Activated CD4-positive, alpha-beta T cell treated with anti-CD3 and anti-CD28 coated beads for 36 hours (primary cell): ENCODE measurements at regions of chr2 and their contacts with region 1.

Region 1: DNA sequence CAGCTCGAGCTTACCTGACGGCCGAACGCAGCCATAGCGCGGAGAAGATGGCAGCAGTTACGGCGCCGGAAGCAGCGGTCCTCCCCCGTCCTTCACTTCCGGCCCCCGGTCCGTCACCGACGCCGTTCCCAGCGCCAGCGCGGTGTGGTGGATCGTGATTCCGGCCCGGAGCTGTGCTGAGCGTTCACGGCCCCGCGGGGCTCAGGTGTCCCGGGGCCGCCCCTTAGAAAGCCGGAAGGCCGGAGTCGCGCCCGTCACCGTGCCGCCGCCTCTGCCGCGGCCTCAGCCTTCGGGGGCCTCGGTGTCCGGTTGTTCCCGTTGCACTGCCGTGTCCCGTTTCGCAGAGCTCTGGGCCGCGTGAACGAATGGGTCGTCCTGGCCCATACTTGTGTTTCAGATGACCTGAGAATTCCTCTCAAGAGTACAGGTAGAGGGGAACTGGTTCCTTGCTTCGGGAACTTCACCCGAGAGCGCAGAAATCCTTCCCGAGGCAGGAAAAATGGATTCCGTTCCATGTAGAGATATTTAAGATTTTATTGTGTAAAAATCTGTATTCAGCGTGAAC is at the start of gene MTERF4:
- DNase-seq: peak; percentile 94
- ATAC-seq: peak; percentile 97
- H3K4me3 Mint-ChIP-seq: peak within 1 kb of the TSS; percentile 98
- H3K27ac Mint-ChIP-seq: peak within 1 kb of the TSS; percentile 99
- H3K4me1 Mint-ChIP-seq: peaks cover 48% of the 10 kb centered on the region
- H3K27me3 Mint-ChIP-seq: no peaks in the 10 kb centered on the region
- total RNA-seq, gene MTERF4: 34.4 to 34.5 TPM

Region 2: DNA sequence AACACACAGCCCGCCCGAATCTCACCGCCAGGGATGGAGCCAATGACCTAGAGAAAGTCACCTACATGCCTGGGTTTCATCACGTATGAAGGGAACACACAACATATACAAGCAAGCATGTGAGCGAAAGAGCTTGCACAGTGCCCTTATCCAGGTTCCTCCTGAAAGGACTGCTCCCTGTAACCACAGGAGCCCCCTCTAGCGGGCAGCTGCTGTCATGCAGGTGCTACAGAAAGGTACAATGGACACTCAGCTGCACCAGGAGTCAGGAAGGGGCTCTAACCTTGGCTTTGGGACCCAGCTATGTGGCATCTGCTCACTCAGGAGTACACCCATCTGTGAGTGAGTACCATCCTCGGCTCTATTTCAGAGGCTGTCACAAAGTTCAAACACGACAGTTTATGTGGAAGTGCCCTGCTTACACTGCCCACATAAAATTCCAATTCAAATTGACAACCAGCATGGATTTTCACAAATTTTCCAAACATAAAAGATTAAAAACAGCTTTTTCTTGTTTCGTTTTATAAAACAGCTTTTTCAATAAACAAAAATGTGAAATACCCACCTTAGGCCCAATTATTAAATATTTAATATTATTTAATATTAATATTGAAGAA is 1080.7 kb before region 1 on chr2:
- CTCF ChIA-PET with region 1: no interaction called
- POLR2A ChIA-PET with region 1: no interaction called
- intact Hi-C with region 1: loop called in 1 of 2 experiments (anchors 5 kb)
- DNase-seq: peak; percentile 83
- ATAC-seq: peak; percentile 28
- H3K4me3 Mint-ChIP-seq: no peak overlapping the region
- H3K27ac Mint-ChIP-seq: no peak overlapping the region
- H3K4me1 Mint-ChIP-seq: peaks cover 25% of the 10 kb centered on the region
- H3K27me3 Mint-ChIP-seq: no peaks in the 10 kb centered on the region

Region 3: GRCh38 chr2:240765007-240765406 is 337.3 kb before region 1 on chr2:
- CTCF ChIA-PET with region 1: no interaction called
- POLR2A ChIA-PET with region 1: no interaction called
- intact Hi-C with region 1: no loop called
- DNase-seq: no peak
- ATAC-seq: no peak
- H3K4me3 Mint-ChIP-seq: no peak overlapping the region
- H3K27ac Mint-ChIP-seq: no peak overlapping the region
- H3K4me1 Mint-ChIP-seq: no peaks in the 10 kb centered on the region
- H3K27me3 Mint-ChIP-seq: no peaks in the 10 kb centered on the region

Region 4: GRCh38 chr2:241081643-241082340 is 20.5 kb before region 1 on chr2:
- CTCF ChIA-PET with region 1: interaction called, 18 read pairs
- POLR2A ChIA-PET with region 1: interaction called, 3 read pairs
- intact Hi-C with region 1: loop called in 1 of 2 experiments (anchors 2 kb)
- DNase-seq: no peak
- ATAC-seq: no peak
- H3K4me3 Mint-ChIP-seq: no peak overlapping the region
- H3K27ac Mint-ChIP-seq: no peak overlapping the region
- H3K4me1 Mint-ChIP-seq: no peaks in the 10 kb centered on the region
- H3K27me3 Mint-ChIP-seq: no peaks in the 10 kb centered on the region